PC-9 (cell line): ENCODE measurements at regions of chr3 and their contacts with region 1.

Region 1: DNA sequence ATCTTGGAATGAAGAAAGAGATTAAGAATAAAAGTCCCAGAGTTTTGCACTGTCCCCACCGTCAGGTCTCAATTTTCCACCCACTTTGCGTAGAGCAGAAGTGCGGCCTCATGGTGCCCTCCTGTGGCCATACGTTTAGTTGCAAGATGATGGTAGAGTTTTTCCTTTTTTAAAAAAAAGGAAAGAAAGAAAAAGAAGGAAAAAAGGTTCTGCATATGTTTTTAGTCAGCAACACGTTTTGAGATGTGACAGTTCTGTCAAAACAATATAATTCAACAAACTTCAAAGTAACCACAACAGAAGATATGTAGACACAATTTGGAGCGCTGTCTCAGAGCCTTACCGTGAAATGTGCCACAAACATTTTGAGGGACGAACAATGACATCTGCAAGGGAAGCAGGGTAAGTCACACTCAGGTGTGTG is 24.6 kb downstream of the EBLN2 start:
- DNase-seq: peak in 1 of 2 experiments; percentile 33
- H3K4me3 ChIP-seq: no peak overlapping the region
- H3K27ac ChIP-seq: no peak overlapping the region
- H3K4me1 ChIP-seq: no peaks in the 10 kb centered on the region
- H3K27me3 ChIP-seq: no peaks in the 10 kb centered on the region
- CTCF ChIP-seq: peak; percentile 79

Region 2: DNA sequence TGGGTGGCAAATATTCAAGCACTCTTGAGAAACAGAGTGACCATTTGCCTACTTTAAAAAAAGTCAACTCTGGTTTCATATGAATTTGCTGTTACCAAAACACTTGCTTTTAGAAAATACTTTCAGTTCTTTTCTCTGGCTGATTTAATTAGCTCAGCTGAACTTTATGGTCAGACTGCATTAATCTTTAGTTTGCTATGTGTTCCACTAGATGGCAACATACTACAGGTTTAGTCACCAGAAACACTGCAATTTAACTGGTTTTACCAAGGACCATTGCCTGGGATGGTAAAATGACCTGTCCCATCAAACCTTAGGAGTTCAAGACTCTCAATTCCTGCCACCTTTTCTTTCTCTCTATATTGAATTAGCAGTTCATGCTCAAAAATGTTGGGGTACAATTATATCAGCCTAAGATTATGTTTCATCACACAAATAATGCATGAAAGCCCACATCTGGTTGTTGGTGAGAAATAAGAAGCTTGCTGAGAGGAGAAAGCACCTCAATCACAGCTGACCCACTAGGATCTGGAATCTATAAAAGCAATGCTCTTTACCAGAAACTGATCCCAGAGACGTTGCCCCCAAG is 1375.1 kb before region 1 on chr3:
- CTCF ChIA-PET with region 1: no interaction called
- POLR2A ChIA-PET with region 1: no interaction called
- intact Hi-C with region 1: loop called (anchors 1 kb)
- DNase-seq: no peak
- H3K4me3 ChIP-seq: no peak overlapping the region
- H3K27ac ChIP-seq: no peak overlapping the region
- H3K4me1 ChIP-seq: no peaks in the 10 kb centered on the region
- H3K27me3 ChIP-seq: peaks cover 28% of the 10 kb centered on the region
- CTCF ChIP-seq: peak; percentile 61

Region 3: GRCh38 chr3:71875461-71875947 is 1210.6 kb before region 1 on chr3:
- CTCF ChIA-PET with region 1: no interaction called
- POLR2A ChIA-PET with region 1: no interaction called
- intact Hi-C with region 1: loop called (anchors 1 kb)
- DNase-seq: peak in 1 of 2 experiments; percentile 58
- H3K4me3 ChIP-seq: no peak overlapping the region
- H3K27ac ChIP-seq: no peak overlapping the region
- H3K4me1 ChIP-seq: no peaks in the 10 kb centered on the region
- H3K27me3 ChIP-seq: peaks cover 18% of the 10 kb centered on the region; the same call in 1 of the 2 replicates
- CTCF ChIP-seq: peak; percentile 69

Region 4: GRCh38 chr3:72847751-72848702 is 238.1 kb before region 1 on chr3 and contains the start of gene SHQ1:
- CTCF ChIA-PET with region 1: no interaction called
- POLR2A ChIA-PET with region 1: no interaction called
- intact Hi-C with region 1: loop called (anchors 2 kb)
- DNase-seq: peak; percentile 80 to 93
- H3K4me3 ChIP-seq: peak within 1 kb of the TSS; percentile 81
- H3K27ac ChIP-seq: no peak within 1 kb of the TSS
- H3K4me1 ChIP-seq: peaks cover 20% of the 10 kb centered on the region; the same call in 1 of the 2 replicates
- H3K27me3 ChIP-seq: no peaks in the 10 kb centered on the region
- CTCF ChIP-seq: no peak
- total RNA-seq, gene SHQ1: 24.4 and 24.8 TPM in 2 replicates

Region 5: DNA sequence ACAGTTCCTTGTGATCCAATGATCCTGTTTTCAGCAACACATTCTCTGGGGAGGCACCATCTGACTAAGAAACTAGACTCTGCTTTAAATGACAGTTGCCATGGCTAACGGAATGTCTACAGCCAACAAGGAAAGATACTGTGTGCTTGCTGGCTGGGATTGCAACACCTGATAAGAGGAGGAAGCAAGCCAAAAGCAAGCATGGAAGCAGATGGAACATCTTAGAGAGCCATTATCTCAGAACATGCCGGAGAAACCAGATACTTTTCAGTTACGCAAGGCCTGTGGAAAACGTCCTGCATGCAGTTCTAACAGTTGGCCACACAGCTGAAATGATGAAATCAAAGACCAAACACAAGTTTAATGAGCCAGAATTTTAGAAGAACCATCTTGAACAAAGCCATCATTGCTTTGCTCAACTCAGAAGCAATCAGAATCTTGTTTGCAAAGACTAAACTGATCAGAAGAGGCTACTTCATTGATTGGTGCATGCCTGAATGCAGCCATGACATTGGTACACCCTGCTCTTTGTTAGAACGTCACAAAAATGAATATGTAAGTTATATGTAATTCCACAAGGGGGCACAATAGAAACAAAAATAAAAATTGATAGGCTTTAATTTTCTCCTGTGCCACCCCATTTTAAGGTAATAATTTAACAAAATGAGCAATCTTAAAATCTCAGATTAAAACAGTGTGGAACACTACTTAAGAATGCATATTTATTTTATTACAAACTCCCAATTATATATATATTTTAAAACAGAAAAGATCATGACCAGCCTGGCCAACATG is 147.4 kb before region 1 on chr3:
- CTCF ChIA-PET with region 1: no interaction called
- POLR2A ChIA-PET with region 1: no interaction called
- intact Hi-C with region 1: loop called (anchors 2 kb)
- DNase-seq: peak; percentile 29 to 70
- H3K4me3 ChIP-seq: peak overlapping the region; percentile 24; the same call in 1 of the 2 replicates
- H3K27ac ChIP-seq: no peak overlapping the region
- H3K4me1 ChIP-seq: peaks cover 7% of the 10 kb centered on the region; the same call in 1 of the 2 replicates
- H3K27me3 ChIP-seq: no peaks in the 10 kb centered on the region
- CTCF ChIP-seq: peak; percentile 81

Region 6: DNA sequence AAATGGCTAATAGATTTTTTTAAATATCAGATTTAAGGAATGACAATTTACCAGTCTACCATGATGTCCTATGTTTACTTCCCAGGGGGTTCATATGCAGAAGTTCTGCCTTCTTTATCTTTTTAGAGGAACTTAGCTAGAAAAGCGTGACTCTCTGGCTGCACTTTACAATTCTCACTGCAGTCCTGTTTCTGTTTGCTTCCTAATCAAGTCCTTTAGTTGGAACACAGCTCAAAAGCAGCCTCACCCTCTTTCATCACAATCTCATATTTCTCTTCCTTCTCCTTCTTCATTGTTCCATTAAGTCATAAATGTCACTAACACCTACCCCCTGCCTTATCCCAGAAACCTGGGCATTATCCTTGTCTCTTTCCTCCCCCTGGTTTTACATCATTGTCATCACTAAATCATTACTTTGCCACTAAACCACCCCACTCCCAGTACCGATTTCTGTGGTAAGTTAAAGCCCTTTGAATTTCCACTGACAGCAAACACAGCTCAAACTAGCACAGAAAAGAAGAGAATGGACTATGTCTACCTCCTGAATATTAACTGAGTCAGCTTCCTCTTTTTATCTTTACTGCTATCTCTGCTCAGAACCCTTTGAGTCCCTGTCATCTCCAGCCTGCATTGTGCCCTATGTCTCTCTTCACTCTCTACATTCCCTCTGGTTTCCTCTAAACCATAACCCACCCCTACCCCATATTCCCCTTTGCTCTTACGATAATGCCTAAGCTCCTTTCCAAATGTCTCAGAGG is 103.3 kb before region 1 on chr3:
- CTCF ChIA-PET with region 1: interaction called, 17 read pairs
- POLR2A ChIA-PET with region 1: no interaction called
- intact Hi-C with region 1: no loop called
- DNase-seq: no peak
- H3K4me3 ChIP-seq: no peak overlapping the region
- H3K27ac ChIP-seq: no peak overlapping the region
- H3K4me1 ChIP-seq: no peaks in the 10 kb centered on the region
- H3K27me3 ChIP-seq: no peaks in the 10 kb centered on the region
- CTCF ChIP-seq: no peak